CD4-positive, alpha-beta memory T cell (primary cell): ENCODE measurements at regions of chr10 and their contacts with region 1.

Region 1: GRCh38 chr10:61750929-61751471 is 88.3 kb downstream of the CABCOCO1 start:
- DNase-seq: peak; percentile 55 to 67 (median 65)
- H3K4me3 ChIP-seq: no peak overlapping the region
- H3K4me3 Mint-ChIP-seq: peak overlapping the region in 3 of 8 donors; percentile 24 to 30 (median 29)
- H3K27ac ChIP-seq: no peak overlapping the region
- H3K27ac Mint-ChIP-seq: peak overlapping the region in 2 of 7 donors; percentile 57 to 64
- H3K4me1 ChIP-seq: peaks cover 20% of the 10 kb centered on the region
- H3K4me1 Mint-ChIP-seq: peaks cover 16 to 29% (median 21%) of the 10 kb centered on the region in 4 donors
- H3K27me3 ChIP-seq: no peaks in the 10 kb centered on the region
- H3K27me3 Mint-ChIP-seq: no peaks in the 10 kb centered on the region

Region 2: DNA sequence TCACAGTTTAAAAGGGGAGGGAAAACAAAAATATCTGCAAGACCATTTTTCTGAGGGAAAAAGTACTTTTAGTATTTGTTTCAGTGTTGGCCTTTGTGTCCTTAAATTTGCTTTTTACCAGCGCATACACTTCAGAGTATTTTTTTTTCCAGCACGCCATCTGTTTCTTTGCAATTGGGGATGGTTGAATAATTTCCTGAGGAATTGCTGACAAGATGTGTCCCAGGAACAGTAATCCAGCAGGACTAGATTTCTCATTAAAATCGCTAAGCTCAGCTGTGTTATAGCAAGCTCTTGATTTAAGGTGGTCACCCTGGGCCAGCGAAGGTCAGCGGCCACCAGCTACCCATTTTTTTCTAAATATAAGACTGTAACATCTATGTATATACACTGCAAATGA is 650.1 kb before region 1 on chr10:
- CTCF ChIA-PET with region 1: no interaction called
- POLR2A ChIA-PET with region 1: no interaction called
- intact Hi-C with region 1: no loop called
- DNase-seq: no peak
- H3K4me3 ChIP-seq: no peak overlapping the region
- H3K4me3 Mint-ChIP-seq: no peak overlapping the region
- H3K27ac ChIP-seq: no peak overlapping the region
- H3K27ac Mint-ChIP-seq: no peak overlapping the region
- H3K4me1 ChIP-seq: no peaks in the 10 kb centered on the region
- H3K4me1 Mint-ChIP-seq: no peaks in the 10 kb centered on the region
- H3K27me3 ChIP-seq: no peaks in the 10 kb centered on the region
- H3K27me3 Mint-ChIP-seq: peaks cover 2 to 6% of the 10 kb centered on the region in 2 donors

Region 3: DNA sequence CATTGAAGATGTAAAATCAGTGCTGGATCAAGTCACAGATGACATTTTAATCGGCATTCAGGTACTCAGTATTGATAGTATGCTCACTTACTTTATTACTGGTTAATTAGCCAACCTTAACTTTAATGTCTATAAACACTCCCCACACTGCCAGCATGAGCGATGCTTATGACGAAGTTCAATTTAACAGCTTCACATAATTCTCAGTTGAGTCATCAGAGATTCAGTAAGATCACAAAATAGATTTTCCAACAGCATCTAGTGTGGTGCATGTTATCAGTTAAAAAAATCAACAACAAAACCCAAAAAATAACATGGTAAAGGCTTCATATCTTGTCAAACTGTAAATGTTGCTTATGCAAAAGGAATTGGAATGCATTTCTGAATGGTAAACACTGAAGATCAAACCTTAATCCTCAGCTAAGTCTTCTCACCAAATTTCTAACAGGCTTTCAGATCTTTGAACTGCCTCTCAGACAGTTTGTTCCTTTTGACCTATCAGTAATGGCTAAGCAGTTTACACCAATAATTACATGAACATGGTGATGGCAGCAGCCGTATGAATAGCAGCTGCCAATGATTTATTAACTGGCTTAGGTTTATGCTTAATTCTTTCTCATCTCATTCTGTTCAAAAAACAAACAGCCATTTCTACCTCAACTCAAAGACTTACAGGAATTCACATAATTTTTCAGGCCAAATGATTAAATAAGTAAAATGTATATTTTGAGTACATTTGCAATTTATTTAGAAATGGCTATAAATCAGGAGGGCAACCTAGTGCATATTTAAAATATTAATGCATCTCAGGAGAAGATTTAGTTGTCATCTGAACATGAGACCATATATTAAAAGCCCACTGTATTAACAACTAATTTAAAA is 10.2 kb after region 1 on chr10:
- CTCF ChIA-PET with region 1: interaction called, 89 read pairs
- POLR2A ChIA-PET with region 1: interaction called, 17 read pairs
- intact Hi-C with region 1: no loop called
- DNase-seq: no peak
- H3K4me3 ChIP-seq: no peak overlapping the region
- H3K4me3 Mint-ChIP-seq: no peak overlapping the region
- H3K27ac ChIP-seq: no peak overlapping the region
- H3K27ac Mint-ChIP-seq: peak overlapping the region in 1 of 7 donors; percentile 53
- H3K4me1 ChIP-seq: peaks cover 13% of the 10 kb centered on the region
- H3K4me1 Mint-ChIP-seq: peaks cover 12 to 17% (median 12%) of the 10 kb centered on the region in 4 donors
- H3K27me3 ChIP-seq: no peaks in the 10 kb centered on the region
- H3K27me3 Mint-ChIP-seq: no peaks in the 10 kb centered on the region

Region 4: DNA sequence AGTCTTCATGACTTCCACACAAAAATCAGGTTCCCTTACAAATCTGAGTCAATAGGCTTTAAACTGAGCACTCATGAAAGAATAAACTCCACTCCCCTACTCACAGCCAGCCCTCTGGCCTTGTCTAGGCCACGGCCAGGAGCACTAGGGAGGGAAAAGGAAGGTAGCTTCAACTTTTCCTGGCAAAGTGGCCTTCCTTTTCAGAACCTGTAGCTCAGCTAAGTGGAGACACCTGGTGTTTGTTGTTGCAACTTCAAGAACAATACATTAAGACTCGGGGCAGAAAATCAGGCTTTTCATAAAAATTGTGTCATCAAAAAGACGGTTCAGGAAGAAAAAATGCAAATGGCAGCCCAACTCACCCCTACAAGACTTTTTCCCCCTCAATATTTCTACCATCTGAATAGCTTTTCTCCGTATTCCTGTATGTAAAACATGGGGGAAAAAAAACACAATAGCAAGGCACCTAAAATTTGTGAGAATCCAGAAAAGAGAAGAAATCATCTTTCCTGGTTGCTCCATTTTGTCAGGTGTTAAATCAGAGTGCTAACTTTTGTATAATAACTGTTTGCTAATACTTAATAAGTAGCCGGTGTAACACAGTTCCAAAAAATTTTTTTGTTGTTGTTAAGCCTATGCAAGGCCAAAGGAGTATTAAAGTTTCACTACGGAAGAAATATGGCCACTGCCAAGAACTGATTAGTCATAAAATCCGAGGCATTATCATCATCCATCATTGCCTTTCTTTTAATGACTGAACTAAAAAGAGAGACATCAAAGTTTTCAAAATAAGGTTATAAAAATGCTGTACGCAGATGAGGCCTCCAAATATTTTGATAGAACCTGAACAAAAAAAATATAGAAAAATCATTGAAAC is 84.3 kb after region 1 on chr10:
- CTCF ChIA-PET with region 1: interaction called, 99 read pairs
- POLR2A ChIA-PET with region 1: interaction called, 7 read pairs
- intact Hi-C with region 1: loop called (anchors 1 kb)
- DNase-seq: peak in 4 of 5 donors; percentile 8 to 15 (median 10)
- H3K4me3 ChIP-seq: no peak overlapping the region
- H3K4me3 Mint-ChIP-seq: peak overlapping the region in 2 of 8 donors; percentile 18 to 50
- H3K27ac ChIP-seq: no peak overlapping the region
- H3K27ac Mint-ChIP-seq: no peak overlapping the region
- H3K4me1 ChIP-seq: peaks cover 15% of the 10 kb centered on the region
- H3K4me1 Mint-ChIP-seq: peaks cover 4 to 14% (median 12%) of the 10 kb centered on the region in 4 donors
- H3K27me3 ChIP-seq: no peaks in the 10 kb centered on the region
- H3K27me3 Mint-ChIP-seq: peaks cover 0 to 2% of the 10 kb centered on the region in 2 donors

Region 5: GRCh38 chr10:61869774-61870525 is 119.0 kb after region 1 on chr10:
- CTCF ChIA-PET with region 1: interaction called, 69 read pairs
- POLR2A ChIA-PET with region 1: interaction called, 22 read pairs
- intact Hi-C with region 1: loop called (anchors 1 kb)
- DNase-seq: no peak
- H3K4me3 ChIP-seq: no peak overlapping the region
- H3K4me3 Mint-ChIP-seq: peak overlapping the region in 1 of 8 donors; percentile 28
- H3K27ac ChIP-seq: no peak overlapping the region
- H3K27ac Mint-ChIP-seq: no peak overlapping the region
- H3K4me1 ChIP-seq: peaks cover 4% of the 10 kb centered on the region
- H3K4me1 Mint-ChIP-seq: peaks cover 0 to 9% (median 3%) of the 10 kb centered on the region in 4 donors
- H3K27me3 ChIP-seq: no peaks in the 10 kb centered on the region
- H3K27me3 Mint-ChIP-seq: no peaks in the 10 kb centered on the region

Region 6: GRCh38 chr10:62244780-62245467 is 493.9 kb after region 1 on chr10:
- CTCF ChIA-PET with region 1: interaction called, 22 read pairs
- POLR2A ChIA-PET with region 1: interaction called, 5 read pairs
- intact Hi-C with region 1: loop called (anchors 1 kb)
- DNase-seq: peak; percentile 52 to 68 (median 65)
- H3K4me3 ChIP-seq: no peak overlapping the region
- H3K4me3 Mint-ChIP-seq: peak overlapping the region in 6 of 8 donors; percentile 22 to 62 (median 42)
- H3K27ac ChIP-seq: no peak overlapping the region
- H3K27ac Mint-ChIP-seq: peak overlapping the region in 4 of 7 donors; percentile 11 to 70 (median 37)
- H3K4me1 ChIP-seq: peaks cover 37% of the 10 kb centered on the region
- H3K4me1 Mint-ChIP-seq: peaks cover 22 to 35% (median 25%) of the 10 kb centered on the region in 4 donors
- H3K27me3 ChIP-seq: no peaks in the 10 kb centered on the region
- H3K27me3 Mint-ChIP-seq: peaks cover 0 to 1% of the 10 kb centered on the region in 2 donors